ENCODE measurements at regions of chr2 and their contacts with region 1.

Region 1: GRCh38 chr2:215828517-215829184 is 184.7 kb downstream of the MREG start:
- DNase-seq: peak; percentile 79
- H3K4me3 Mint-ChIP-seq: no peak overlapping the region
- H3K27ac Mint-ChIP-seq: peak overlapping the region; percentile 82
- H3K4me1 Mint-ChIP-seq: peaks cover 66% of the 10 kb centered on the region
- H3K27me3 Mint-ChIP-seq: no peaks in the 10 kb centered on the region
- CTCF ChIP-seq: peak; percentile 87

Region 2: DNA sequence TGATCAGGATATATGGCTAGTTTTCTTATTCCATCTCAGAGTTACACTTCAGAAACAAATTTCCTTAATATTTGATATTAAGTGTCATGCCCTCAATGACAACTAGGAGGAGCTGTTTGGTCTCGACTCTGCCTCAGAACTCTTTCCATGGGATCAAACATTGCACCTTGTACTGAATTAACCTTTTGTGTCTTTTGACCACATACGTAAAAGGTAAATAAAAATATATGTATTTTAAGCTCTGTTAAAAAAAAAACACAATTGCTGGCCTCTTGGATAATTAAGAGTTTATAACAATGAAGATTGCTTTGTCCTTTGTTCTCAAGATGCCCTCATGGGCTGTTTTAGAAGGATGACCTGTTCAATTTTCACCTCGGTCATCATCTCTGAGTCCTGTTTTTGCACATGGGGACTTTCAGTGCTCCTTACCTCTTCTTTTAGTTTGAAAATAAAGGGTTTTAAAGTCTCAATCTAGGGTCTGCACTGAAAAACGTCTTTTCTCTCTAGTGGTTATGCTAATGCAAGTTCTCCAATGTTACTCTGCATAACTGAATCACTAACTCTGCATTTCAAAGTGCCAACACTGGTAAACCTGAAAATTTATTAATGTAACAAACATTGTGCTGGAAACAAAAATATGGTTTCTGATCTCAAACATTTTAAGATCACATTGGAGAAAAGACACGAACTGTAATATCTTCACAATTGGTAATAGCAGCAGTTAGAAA is 374.0 kb before region 1 on chr2:
- CTCF ChIA-PET with region 1: interaction called, 9 read pairs
- intact Hi-C with region 1: loop called (anchors 5 kb)
- DNase-seq: peak; percentile 21
- H3K4me3 Mint-ChIP-seq: no peak overlapping the region
- H3K27ac Mint-ChIP-seq: no peak overlapping the region
- H3K4me1 Mint-ChIP-seq: no peaks in the 10 kb centered on the region
- H3K27me3 Mint-ChIP-seq: no peaks in the 10 kb centered on the region
- CTCF ChIP-seq: peak; percentile 63

Region 3: DNA sequence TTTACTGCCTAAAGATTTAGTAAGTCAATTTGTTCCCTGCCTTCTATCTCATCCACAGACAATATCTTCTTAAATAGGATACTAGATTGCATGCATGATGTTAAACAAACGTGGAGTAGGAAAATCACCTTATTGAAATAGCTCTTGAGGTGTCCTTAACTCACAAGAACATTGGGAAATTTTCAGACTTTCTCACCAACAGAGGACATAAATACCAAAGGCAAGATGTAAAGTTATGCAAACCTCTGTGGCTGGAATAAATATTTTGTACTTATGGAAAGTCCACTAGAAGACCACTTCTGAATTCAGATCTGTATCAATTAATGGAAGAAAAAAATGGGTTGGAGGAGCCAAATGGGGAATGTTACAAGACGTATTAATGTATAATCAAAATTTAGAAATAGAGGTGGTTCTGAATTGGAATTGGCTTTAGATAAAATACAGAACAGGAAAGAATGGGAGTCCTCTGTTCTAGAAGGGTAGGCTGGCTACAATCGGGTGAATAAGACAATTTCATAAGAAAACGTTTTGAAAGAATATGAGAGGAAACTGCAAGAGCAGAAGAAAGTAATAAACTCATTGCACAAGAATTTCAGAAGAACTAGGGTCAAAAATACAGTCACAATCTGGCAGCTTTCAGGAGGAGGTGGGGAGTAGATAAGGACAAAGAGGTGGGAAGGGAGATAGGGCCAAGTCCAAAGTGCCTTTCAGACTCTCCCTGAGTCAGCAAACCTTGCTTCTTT is 323.4 kb before region 1 on chr2:
- CTCF ChIA-PET with region 1: interaction called, 4 read pairs
- intact Hi-C with region 1: loop called (anchors 5 kb)
- DNase-seq: no peak
- H3K4me3 Mint-ChIP-seq: peak overlapping the region; percentile 3
- H3K27ac Mint-ChIP-seq: no peak overlapping the region
- H3K4me1 Mint-ChIP-seq: peaks cover 26% of the 10 kb centered on the region
- H3K27me3 Mint-ChIP-seq: no peaks in the 10 kb centered on the region
- CTCF ChIP-seq: no peak

Region 4: DNA sequence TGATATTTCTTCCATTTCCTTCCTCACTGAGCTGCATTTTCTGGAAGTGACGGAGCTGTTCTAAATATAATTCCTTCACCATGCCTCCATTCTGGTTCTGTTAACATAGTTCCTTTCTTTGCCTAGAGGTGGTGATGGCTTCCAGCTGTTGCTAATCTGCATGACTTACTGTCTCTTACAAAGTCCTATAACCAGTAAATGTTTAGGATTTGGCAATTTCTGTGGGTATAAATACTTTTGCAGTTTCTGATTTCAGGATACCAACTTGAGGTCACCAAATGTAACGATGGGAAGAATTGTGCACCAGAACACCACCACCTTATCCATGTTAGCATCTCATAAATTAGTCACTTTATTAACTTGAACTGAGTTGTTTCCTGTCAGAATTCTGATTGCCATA is 291.0 kb before region 1 on chr2:
- CTCF ChIA-PET with region 1: no interaction called
- intact Hi-C with region 1: loop called (anchors 10 kb)
- DNase-seq: no peak
- H3K4me3 Mint-ChIP-seq: no peak overlapping the region
- H3K27ac Mint-ChIP-seq: no peak overlapping the region
- H3K4me1 Mint-ChIP-seq: peaks cover 17% of the 10 kb centered on the region
- H3K27me3 Mint-ChIP-seq: no peaks in the 10 kb centered on the region
- CTCF ChIP-seq: no peak

Region 5: GRCh38 chr2:215619022-215619958 is 209.4 kb before region 1 on chr2:
- CTCF ChIA-PET with region 1: interaction called, 3 read pairs
- intact Hi-C with region 1: loop called (anchors 10 kb)
- DNase-seq: peak; percentile 34
- H3K4me3 Mint-ChIP-seq: peak overlapping the region; percentile 57
- H3K27ac Mint-ChIP-seq: peak overlapping the region; percentile 48
- H3K4me1 Mint-ChIP-seq: peaks cover 25% of the 10 kb centered on the region
- H3K27me3 Mint-ChIP-seq: no peaks in the 10 kb centered on the region
- CTCF ChIP-seq: no peak

Region 6: GRCh38 chr2:215680605-215681598 is 147.7 kb before region 1 on chr2:
- CTCF ChIA-PET with region 1: interaction called, 3 read pairs
- intact Hi-C with region 1: loop called (anchors 2 kb)
- DNase-seq: peak; percentile 73
- H3K4me3 Mint-ChIP-seq: peak overlapping the region; percentile 28
- H3K27ac Mint-ChIP-seq: peak overlapping the region; percentile 94
- H3K4me1 Mint-ChIP-seq: peaks cover 61% of the 10 kb centered on the region
- H3K27me3 Mint-ChIP-seq: no peaks in the 10 kb centered on the region
- CTCF ChIP-seq: no peak

Region 7: GRCh38 chr2:215912299-215912842 is 83.7 kb after region 1 on chr2:
- CTCF ChIA-PET with region 1: interaction called, 3 read pairs
- intact Hi-C with region 1: loop called (anchors 5 kb)
- DNase-seq: no peak
- H3K4me3 Mint-ChIP-seq: no peak overlapping the region
- H3K27ac Mint-ChIP-seq: no peak overlapping the region
- H3K4me1 Mint-ChIP-seq: no peaks in the 10 kb centered on the region
- H3K27me3 Mint-ChIP-seq: no peaks in the 10 kb centered on the region
- CTCF ChIP-seq: no peak

Measured in Calu3 (cell line).